ENCODE measurements at regions of chr20 and their contacts with region 1.

Region 1: DNA sequence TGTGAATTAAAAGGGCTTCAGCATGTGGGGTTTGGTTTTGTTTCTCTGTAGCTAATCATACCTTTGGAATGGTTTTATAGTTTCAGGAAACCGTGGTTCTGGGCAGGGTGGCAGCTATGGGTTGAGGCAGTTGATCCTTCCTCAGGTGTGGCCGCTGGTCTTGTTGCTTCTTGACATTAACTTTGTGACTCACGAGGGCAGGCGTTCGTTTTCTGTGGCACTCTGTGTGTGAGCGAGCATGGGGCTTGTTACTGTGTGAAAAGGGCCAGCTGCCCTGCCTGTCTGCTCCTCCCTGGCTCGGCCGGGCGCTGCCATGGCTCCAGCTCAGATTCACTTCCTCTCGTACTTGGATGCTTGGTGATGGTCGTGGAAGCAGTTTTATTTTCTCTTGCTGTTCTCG is 16.2 kb downstream of the DNAJC5 start:
- DNase-seq: no peak
- H3K4me3 ChIP-seq: no peak overlapping the region
- H3K27ac ChIP-seq: no peak overlapping the region
- H3K4me1 ChIP-seq: peaks cover 26 to 46% (median 35%) of the 10 kb centered on the region in 4 donors
- H3K27me3 ChIP-seq: no peaks in the 10 kb centered on the region
- CTCF ChIP-seq: no peak
- EP300 ChIP-seq: no peak
- POLR2A ChIP-seq: no peak

Region 2: DNA sequence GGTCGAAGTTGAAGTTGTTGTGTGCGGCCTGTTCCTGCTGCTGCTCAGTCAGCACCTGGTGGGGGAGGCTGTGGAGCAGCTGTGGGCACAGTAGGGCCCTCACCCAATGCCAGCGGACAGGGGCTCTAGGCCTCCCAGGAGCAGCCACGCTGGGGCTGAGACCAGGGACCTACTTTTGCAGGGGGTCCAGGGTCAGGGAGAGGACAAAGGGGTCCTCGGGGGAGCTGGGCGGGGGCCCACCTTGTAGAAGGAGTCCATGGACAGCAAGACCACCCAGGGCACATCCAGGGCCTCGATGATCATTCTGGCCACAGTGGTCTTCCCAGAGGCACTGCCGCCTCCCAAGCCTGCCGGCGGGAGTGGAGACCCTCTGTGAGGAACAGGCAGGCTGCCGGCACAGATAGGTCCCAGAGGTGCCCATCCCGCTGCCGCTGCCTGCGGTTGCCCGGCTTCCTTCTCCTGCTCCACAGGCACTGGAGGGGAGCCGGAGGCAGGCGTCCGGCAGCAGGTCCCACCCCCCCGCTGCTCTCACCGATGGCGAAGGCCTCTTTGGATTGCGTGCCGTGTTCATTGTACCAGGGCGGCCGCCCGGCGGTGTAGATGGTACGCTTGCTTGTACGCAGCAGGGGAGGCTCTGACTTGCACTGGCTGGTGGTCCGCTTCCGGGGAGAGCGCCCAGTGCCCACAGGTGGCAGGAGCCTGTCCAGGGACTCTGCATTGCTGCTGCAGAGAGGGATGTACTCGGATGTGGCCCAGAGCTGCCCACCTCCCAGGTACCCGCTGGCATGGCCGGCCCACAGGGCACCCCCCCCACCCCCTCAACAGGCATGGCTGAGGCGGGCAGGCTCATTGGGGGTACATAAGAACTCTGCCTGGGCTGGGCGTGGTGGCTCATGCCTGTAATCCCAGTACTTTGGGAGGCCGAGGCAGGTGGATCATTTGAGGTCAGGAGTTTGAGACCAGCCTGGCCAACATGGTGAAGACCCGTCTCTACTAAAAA is 35.0 kb after region 1 on chr20:
- intact Hi-C with region 1: loop called (anchors 2 kb)
- DNase-seq: no peak
- H3K4me3 ChIP-seq: no peak overlapping the region
- H3K27ac ChIP-seq: peak overlapping the region in 2 of 4 donors; percentile 88 to 93
- H3K4me1 ChIP-seq: peaks cover 72 to 78% (median 76%) of the 10 kb centered on the region in 4 donors
- H3K27me3 ChIP-seq: no peaks in the 10 kb centered on the region
- CTCF ChIP-seq: no peak
- EP300 ChIP-seq: no peak
- POLR2A ChIP-seq: no peak

Measured in esophagus muscularis mucosa (tissue), 4 donors.